Heart right ventricle (tissue), 16 donors: ENCODE measurements at regions of chr22 and their contacts with region 1.

Region 1: GRCh38 chr22:45720839-45721378 is 49.3 kb downstream of the ATXN10 start:
- DNase-seq: no peak
- ATAC-seq: no peak
- H3K4me3 ChIP-seq: no peak overlapping the region
- H3K27ac ChIP-seq: no peak overlapping the region
- H3K4me1 ChIP-seq: peaks cover 0 to 5% (median 0%) of the 10 kb centered on the region in 9 donors
- H3K27me3 ChIP-seq: no peaks in the 10 kb centered on the region
- CTCF ChIP-seq: no peak

Region 2: GRCh38 chr22:43743131-43743530 is 1977.8 kb before region 1 on chr22:
- intact Hi-C with region 1: no loop called
- DNase-seq: no peak
- ATAC-seq: no peak
- H3K4me3 ChIP-seq: no peak overlapping the region
- H3K27ac ChIP-seq: no peak overlapping the region
- H3K4me1 ChIP-seq: peaks cover 0 to 30% (median 9%) of the 10 kb centered on the region in 9 donors
- H3K27me3 ChIP-seq: peaks cover 0 to 14% (median 0%) of the 10 kb centered on the region in 7 donors
- CTCF ChIP-seq: no peak

Region 3: DNA sequence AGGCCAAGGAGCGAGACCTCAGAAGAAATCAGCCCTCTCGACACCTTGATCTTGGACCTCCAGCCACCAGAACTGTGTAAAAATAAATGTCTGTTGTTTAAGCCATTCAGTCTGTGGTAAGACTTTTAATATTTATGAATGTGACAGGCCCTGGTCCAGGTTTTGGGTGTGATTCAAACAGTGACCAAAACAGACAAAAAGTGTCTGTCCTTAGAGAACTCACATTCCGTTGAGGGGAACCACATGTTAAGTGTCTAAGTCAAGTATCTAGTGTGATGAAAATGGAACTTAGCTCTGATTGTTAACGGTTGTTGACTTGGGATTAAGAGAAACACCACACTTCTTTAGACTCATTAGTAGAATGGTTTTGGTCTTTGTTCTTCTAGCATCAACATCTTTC is 27.1 kb before region 1 on chr22:
- intact Hi-C with region 1: loop called in 1 of 10 experiments (anchors 1 kb)
- DNase-seq: no peak
- ATAC-seq: no peak
- H3K4me3 ChIP-seq: no peak overlapping the region
- H3K27ac ChIP-seq: no peak overlapping the region
- H3K4me1 ChIP-seq: peaks cover 0 to 18% (median 7%) of the 10 kb centered on the region in 9 donors
- H3K27me3 ChIP-seq: no peaks in the 10 kb centered on the region
- CTCF ChIP-seq: no peak